Cardiac septum (tissue), 1 donor: ENCODE measurements at regions of chr1 and their contacts with region 1.

Region 1: DNA sequence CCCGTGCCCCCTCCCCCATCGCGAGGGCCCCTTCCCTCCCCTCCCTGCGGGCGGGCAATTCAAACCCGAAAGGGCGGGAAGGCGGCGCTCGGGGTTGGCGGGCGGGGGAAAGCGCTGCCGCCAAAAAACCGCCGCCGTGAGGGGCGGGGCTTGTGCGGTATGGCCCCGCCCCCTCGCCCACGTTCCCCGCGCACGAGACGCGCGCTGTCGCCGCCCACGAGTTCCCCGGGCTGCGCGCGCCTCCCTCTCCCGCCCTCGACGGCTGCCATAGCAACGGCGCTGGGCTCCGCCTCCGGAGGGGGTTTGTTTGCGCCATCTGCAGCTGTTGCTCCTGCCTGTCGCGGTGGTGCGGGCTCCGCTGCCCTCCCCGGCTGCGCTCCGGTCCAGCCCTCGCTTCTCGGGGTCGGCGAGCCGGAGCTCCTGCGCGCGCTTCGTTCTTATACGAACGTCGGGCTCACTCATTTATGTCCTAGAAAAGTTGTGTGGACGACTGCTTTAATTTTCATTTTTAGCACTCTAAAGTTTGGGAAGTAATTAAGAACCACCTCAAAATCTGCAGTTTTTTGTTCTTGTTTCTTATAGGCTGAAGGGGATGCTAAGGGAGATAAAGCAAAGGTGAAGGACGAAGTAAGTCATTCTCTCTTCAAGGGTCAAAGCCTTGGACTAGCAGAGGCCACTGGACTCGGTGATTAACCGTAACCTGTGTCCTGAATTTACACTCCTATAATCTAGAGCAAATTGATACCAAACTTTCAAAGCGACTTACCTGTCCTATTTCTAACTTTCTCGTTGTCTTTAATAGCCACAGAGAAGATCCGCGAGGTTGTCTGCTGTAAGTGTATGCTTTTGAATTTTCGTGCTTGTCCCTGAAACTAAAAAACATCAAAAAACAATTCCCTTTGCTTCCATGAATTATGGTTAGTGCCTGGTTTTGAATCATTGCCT is 933 bp downstream of the HMGN2 start:
- DNase-seq: peak; percentile 99

Region 2: GRCh38 chr1:26431979-26432695 is 41.0 kb before region 1 on chr1 and contains the start of gene DHDDS:
- intact Hi-C with region 1: loop called (anchors 2 kb)
- DNase-seq: peak; percentile 98
- total RNA-seq, gene DHDDS: 34.9 TPM

Region 3: DNA sequence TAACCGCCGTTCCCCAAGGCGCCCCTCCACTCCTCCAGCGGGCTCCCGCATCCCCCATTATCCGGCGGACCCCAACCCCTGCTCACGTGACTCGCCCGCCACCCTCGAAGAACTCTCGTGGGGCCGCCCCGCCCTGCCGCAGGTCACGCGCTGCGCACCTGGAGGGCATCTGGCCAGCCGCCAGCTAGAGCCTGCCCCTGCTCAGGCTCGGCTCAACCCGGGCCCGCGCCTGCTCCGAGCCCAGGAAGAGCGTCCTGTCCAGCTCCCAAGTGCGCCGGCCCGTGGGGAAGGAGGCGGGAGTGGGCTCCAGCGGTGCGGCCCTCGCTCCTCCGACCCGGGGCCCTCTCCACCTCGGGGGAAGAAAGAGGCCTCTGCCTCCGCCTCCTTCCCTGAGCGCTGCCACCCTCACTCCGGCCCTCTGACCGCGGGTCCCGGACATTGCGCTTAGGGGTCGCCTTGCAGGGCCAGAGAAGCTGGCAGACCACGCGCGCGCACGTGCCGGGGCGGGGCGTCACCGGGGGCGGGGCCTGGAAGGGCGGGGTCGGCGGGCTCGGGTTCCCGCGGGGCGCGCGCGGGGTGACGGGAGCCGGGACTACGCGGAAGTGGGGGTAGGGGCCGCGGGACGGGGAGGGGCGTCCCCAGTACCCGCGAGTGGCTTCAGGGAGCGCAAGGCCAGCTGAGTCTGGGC is 27.5 kb after region 1 on chr1:
- intact Hi-C with region 1: loop called (anchors 2 kb)
- DNase-seq: peak; percentile 97

Region 4: GRCh38 chr1:26541816-26542711 is 68.9 kb after region 1 on chr1:
- intact Hi-C with region 1: no loop called
- DNase-seq: peak; percentile 96